ENCODE measurements at regions of chr6 and their contacts with region 1.

Region 1: DNA sequence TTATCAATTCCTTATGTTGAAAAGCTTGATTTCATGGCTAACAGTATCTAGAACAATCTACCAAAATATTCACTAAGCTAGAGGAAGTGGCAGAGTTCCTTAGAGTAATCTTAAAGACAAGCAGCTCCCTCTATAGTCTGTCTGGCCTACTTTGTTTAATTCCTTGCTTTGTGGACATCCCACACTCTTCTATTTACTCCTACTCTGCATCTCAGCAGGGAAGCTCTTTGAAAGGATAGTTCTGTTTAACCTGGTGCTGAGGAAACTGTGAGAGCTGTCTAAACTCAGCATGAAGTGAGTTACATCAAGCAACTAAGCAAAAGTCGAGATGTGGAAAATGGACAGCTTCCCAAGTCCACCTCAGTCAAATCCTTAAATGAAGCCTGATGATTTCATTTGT is 4.3 kb downstream of the REV3L start:
- DNase-seq: peak; percentile 74
- H3K4me3 ChIP-seq: peak overlapping the region; percentile 8
- H3K27ac ChIP-seq: peak overlapping the region; percentile 60
- H3K4me1 ChIP-seq: peaks cover 39% of the 10 kb centered on the region
- CTCF ChIP-seq: peak; percentile 78

Region 2: GRCh38 chr6:111361648-111362047 is 117.1 kb before region 1 on chr6:
- CTCF ChIA-PET with region 1: no interaction called
- POLR2A ChIA-PET with region 1: interaction called, 3 read pairs
- intact Hi-C with region 1: loop called (anchors 1 kb)
- DNase-seq: peak; percentile 4
- H3K4me3 ChIP-seq: no peak overlapping the region
- H3K27ac ChIP-seq: no peak overlapping the region
- H3K4me1 ChIP-seq: no peaks in the 10 kb centered on the region
- CTCF ChIP-seq: peak; percentile 69

Region 3: DNA sequence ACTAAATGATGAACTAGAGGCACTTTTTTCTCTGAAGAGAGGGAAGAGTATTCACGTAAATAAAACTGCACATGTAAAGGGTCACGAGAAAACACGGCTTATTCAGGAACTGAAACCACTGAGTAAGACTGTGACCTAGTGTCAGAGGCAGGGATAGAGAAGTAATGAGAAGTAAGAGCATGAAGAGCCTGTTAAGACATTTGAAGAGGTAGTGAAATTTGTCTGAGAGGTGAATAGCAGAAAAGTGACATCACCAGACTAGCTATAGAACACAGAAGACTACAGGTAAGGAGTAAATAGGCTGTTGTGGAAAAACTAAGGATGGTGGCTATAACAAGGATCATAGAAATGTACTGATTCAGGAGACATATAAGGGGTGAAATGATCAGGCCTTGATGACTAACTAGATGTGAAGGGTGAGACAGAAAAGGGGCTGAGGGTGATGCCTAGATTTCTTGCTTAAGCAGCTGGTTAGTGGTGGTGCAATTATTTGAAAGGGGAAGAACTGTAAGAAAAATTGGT is 72.5 kb before region 1 on chr6:
- CTCF ChIA-PET with region 1: no interaction called
- POLR2A ChIA-PET with region 1: interaction called, 3 read pairs
- intact Hi-C with region 1: loop called (anchors 5 kb)
- DNase-seq: peak; percentile 82
- H3K4me3 ChIP-seq: peak overlapping the region; percentile 49
- H3K27ac ChIP-seq: peak overlapping the region; percentile 53
- H3K4me1 ChIP-seq: peaks cover 27% of the 10 kb centered on the region
- CTCF ChIP-seq: no peak

Measured in OCI-LY7 (cell line).